ENCODE measurements at regions of chr7 and their contacts with region 1.

Region 1: GRCh38 chr7:152683297-152683696 is 7.4 kb upstream of the XRCC2 start:
- DNase-seq: no peak
- ATAC-seq: no peak
- H3K4me3 ChIP-seq: no peak overlapping the region
- H3K27ac ChIP-seq: no peak overlapping the region
- H3K4me1 ChIP-seq: no peaks in the 10 kb centered on the region
- H3K27me3 ChIP-seq: no peaks in the 10 kb centered on the region
- CTCF ChIP-seq: no peak

Region 2: DNA sequence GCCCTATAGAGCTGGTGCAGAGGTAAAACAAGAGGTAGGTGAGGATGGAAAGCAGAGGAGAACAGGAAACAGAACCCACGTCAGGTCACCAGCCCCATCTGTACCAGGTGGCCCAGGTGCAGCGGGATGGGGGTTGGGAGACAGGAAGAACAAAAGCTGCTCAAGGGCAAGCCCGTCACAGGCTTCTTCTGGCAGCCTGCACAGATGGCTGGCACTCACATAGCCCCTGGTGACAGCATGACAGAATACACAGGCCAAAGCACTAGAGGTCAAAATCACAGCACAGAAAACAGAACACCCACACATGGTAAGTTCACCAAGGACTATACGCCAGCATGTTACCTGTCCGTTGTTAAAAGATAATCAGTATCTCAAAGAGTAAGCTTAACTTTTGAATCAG is 531.0 kb before region 1 on chr7:
- CTCF ChIA-PET with region 1: interaction called, 12 read pairs
- POLR2A ChIA-PET with region 1: no interaction called
- intact Hi-C with region 1: no loop called
- DNase-seq: no peak
- ATAC-seq: no peak
- H3K4me3 ChIP-seq: no peak overlapping the region
- H3K27ac ChIP-seq: no peak overlapping the region
- H3K4me1 ChIP-seq: no peaks in the 10 kb centered on the region
- H3K27me3 ChIP-seq: no peaks in the 10 kb centered on the region
- CTCF ChIP-seq: no peak

Region 3: DNA sequence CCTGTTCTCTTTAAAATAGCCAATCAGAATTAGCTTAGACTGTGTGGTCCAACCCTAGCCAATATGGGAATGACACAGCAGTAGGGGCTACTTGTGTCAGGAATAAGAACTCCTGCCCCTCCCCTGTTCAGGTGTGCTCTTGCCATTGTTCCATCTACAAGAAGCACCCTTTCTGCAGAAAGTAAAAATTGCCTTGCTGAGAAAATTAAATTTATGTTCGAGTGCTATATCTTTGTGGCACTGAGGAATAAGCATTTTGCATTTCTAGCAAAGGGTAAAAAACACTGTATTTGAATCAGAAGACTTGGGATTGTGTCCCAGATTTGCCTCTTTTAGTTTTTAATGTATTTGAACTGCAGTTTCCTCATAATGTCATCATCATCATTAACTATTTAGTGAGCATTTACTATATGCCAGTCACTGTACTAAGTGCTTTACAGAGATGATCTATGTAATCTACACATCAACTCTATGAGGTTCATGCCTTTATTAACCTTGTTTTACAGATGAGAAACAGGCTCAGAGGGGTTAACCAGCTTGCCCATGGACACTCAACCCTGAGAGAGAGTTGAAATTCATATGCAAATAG is 21.6 kb after region 1 on chr7:
- CTCF ChIA-PET with region 1: no interaction called
- POLR2A ChIA-PET with region 1: no interaction called
- intact Hi-C with region 1: no loop called
- DNase-seq: no peak
- ATAC-seq: no peak
- H3K4me3 ChIP-seq: no peak overlapping the region
- H3K27ac ChIP-seq: no peak overlapping the region
- H3K4me1 ChIP-seq: peaks cover 6% of the 10 kb centered on the region; the same call in 1 of the 2 replicates
- H3K27me3 ChIP-seq: no peaks in the 10 kb centered on the region
- CTCF ChIP-seq: no peak

Measured in PC-3 (cell line).